A673 (cell line): ENCODE measurements at regions of chr19 and their contacts with region 1.

Region 1: DNA sequence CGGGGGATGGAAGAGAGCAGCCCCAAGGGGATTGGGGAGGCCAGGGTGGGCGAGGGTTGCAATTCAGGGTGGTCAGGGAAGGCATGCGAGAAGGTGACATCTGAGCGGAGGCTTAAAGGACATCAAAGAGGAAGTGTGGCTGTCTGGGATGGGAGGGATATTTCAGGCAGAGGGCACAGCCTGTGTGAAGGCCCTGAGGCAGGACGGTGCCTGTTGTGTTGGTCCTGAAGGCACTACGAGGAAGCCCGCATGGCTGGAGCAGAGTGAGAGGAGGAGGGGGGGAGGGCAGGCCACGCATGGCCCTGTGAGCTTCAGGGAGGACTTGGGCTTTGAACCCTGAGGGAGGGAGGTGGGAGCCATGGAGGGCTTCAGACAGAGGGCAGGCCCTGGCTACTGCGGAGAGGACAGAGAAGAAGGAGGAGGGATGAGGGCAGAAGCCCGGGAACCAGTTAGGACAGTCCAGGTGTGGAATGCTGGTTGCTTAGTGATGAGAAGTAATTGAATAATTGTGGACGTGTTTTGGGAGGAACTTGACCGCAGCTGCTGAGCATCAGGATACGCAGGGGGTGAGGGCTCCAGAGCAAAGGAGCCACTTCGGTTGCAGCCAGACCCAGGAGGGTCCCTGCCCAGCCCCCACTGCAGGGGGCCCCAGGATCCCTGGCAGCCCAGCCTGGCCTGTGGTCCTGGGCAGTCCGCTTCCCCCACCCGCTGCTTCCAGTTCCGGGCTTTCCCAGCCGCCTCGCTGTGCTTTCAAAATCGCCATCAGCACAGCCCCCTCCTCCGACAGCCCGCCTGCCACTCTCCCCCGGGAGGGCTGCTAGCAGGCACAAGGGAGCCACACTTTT is 6.2 kb downstream of the TLE6 start:
- DNase-seq: peak; percentile 99
- H3K4me3 ChIP-seq: peak overlapping the region; percentile 14
- H3K27ac ChIP-seq: peak overlapping the region; percentile 22
- H3K4me1 ChIP-seq: peaks cover 27% of the 10 kb centered on the region
- H3K27me3 ChIP-seq: peaks cover 5% of the 10 kb centered on the region
- CTCF ChIP-seq: no peak

Region 2: GRCh38 chr19:2969104-2969504 is 14.5 kb before region 1 on chr19:
- CTCF ChIA-PET with region 1: no interaction called
- POLR2A ChIA-PET with region 1: no interaction called
- intact Hi-C with region 1: no loop called
- DNase-seq: no peak
- H3K4me3 ChIP-seq: no peak overlapping the region
- H3K27ac ChIP-seq: no peak overlapping the region
- H3K4me1 ChIP-seq: peaks cover 5% of the 10 kb centered on the region
- H3K27me3 ChIP-seq: no peaks in the 10 kb centered on the region
- CTCF ChIP-seq: no peak

Region 3: GRCh38 chr19:3035542-3036118 is 52.1 kb after region 1 on chr19:
- CTCF ChIA-PET with region 1: no interaction called
- POLR2A ChIA-PET with region 1: no interaction called
- intact Hi-C with region 1: loop called (anchors 5 kb)
- DNase-seq: peak; percentile 100
- H3K4me3 ChIP-seq: peak overlapping the region; percentile 58
- H3K27ac ChIP-seq: peak overlapping the region; percentile 91
- H3K4me1 ChIP-seq: peaks cover 16% of the 10 kb centered on the region
- H3K27me3 ChIP-seq: no peaks in the 10 kb centered on the region
- CTCF ChIP-seq: no peak